ENCODE measurements at regions of chr1 and their contacts with region 1.

Region 1: GRCh38 chr1:207997486-207998268 is 86.8 kb upstream of the CD34 start:
- DNase-seq: peak; percentile 79 to 85
- ATAC-seq: peak; percentile 85
- H3K4me3 ChIP-seq: no peak overlapping the region
- H3K27ac ChIP-seq: no peak overlapping the region
- H3K4me1 ChIP-seq: no peaks in the 10 kb centered on the region
- H3K27me3 ChIP-seq: no peaks in the 10 kb centered on the region

Region 2: DNA sequence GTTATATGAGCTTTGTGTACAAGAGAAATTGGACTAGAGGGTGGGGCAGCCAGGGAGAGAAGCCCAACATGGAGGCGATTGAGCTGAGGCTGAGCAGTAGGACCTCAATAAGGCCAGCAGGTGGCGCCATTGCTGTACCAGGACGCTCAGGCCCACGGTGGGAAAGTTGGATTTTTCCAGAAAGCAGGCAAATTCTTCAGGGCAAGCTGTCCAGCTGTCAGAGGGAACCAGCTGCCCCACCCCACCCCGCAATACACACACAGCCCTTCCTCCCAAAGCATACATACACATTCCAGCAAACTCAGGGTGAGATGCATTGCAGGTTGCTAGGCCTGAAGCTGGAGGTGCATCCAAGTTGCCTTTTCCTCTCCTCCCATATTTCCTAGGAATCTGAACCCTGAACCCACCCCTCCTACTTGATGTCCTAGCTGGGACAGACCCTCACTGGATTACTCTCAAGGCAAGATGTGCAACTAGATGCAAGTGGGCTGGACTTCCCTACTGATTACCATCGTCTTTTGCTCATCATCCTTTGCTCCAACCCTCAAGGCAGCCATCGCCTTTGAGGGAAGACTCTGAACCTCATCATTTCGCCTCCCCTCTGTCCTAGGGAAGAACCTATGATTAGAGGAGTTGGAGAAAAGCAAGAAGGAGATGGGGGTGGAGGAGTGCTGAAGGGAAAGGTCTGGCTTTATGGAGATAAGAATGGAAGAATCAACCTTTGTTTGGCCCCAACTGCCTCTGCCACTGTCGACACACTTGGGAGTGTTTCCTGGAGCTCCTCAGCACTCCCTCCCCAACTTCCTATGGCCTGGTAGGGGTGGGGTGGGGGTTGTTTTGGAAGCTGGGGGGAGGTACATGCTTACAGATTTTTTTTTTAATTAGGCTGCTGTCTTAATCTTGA is 112.3 kb before region 1 on chr1:
- intact Hi-C with region 1: loop called in 1 of 2 experiments (anchors 2 kb)
- DNase-seq: peak; percentile 90 to 94
- ATAC-seq: peak; percentile 93
- H3K4me3 ChIP-seq: no peak overlapping the region
- H3K27ac ChIP-seq: no peak overlapping the region
- H3K4me1 ChIP-seq: peaks cover 0 to 5% of the 10 kb centered on the region in 2 donors
- H3K27me3 ChIP-seq: no peaks in the 10 kb centered on the region

Measured in aorta (tissue), 5 donors.